Activated B cell treated with CpG ODN at 0.5 μM for 24 hours (primary cell): ENCODE measurements at regions of chr16 and their contacts with region 1.

Region 1: DNA sequence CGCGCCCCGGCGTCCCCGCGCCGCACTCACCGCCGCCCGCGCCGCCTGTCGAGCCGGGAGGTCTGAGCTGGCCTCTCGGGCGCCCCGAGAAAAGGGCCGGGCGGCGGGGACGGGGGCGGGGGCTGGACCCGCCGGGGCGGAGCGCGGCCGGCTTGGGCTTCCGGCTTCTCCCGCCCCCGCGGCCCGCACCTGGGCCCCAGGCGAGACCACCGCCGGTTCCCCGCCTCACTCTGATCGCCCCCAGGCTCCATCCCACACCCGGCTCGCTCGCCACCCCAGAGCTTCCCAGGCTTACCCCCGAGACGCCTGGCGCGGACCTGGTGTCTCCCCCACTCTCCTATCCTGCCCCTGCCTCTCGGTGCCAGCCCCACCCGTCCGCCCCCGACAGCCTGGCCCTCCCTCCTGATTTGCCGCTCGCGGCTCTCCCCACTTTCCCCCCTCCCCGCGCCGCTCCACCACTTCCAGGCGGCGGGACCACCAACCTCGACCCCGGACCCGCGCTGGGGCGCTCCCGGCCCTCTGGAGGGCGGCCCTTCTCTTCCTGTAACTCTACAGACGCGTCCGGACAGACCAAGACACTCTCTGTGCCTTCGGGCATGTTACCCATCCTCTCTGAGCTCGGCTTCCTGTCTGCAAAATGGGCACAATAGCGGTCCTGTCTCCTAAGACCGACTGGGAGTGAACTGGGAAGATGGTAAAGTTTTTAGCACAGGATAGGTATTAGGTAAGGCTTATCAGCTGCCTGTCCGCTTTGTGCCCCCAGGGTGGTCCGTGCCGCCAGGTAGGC is at the start of gene LITAF:
- DNase-seq: peak; percentile 71
- ATAC-seq: peak; percentile 60
- H3K4me3 Mint-ChIP-seq: peak within 1 kb of the TSS; percentile 91
- H3K27ac Mint-ChIP-seq: peak within 1 kb of the TSS; percentile 94
- H3K4me1 Mint-ChIP-seq: peaks cover 48% of the 10 kb centered on the region
- H3K27me3 Mint-ChIP-seq: no peaks in the 10 kb centered on the region
- CTCF ChIP-seq: no peak
- total RNA-seq, gene LITAF: 124 and 126 TPM in 2 replicates

Region 2: DNA sequence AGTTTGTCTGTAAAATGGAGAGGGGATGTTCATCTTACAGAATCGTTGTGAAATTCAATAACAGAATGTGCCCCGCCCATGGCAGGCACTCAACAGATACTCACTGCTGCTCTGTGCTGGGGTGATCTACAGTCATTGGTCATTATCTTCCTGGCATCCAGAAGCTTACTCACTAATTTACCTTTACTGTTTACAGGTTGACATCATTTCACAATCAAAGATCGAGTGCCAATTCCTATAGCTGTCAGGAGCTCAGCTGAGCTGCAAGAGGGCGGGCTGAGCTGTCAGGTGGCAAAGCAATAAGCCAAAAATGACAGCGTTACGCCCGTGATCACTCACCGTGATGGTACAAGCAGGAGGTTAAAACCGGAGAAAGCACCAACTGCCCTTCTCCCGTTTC is 51.6 kb before region 1 on chr16:
- CTCF ChIA-PET with region 1: interaction called, 4 read pairs
- POLR2A ChIA-PET with region 1: interaction called, 8 read pairs
- intact Hi-C with region 1: loop called (anchors 2 kb)
- DNase-seq: no peak
- ATAC-seq: no peak
- H3K4me3 Mint-ChIP-seq: no peak overlapping the region
- H3K27ac Mint-ChIP-seq: no peak overlapping the region
- H3K4me1 Mint-ChIP-seq: no peaks in the 10 kb centered on the region
- H3K27me3 Mint-ChIP-seq: no peaks in the 10 kb centered on the region
- CTCF ChIP-seq: no peak

Region 3: GRCh38 chr16:11597239-11598101 is 10.4 kb after region 1 on chr16:
- CTCF ChIA-PET with region 1: no interaction called
- POLR2A ChIA-PET with region 1: interaction called, 14 read pairs
- intact Hi-C with region 1: loop called (anchors 1 kb)
- DNase-seq: no peak
- ATAC-seq: peak; percentile 85
- H3K4me3 Mint-ChIP-seq: no peak overlapping the region
- H3K27ac Mint-ChIP-seq: peak overlapping the region; percentile 30
- H3K4me1 Mint-ChIP-seq: peaks cover 16% of the 10 kb centered on the region
- H3K27me3 Mint-ChIP-seq: peaks cover 2% of the 10 kb centered on the region
- CTCF ChIP-seq: no peak

Region 4: GRCh38 chr16:11639925-11640899 is 53.2 kb after region 1 on chr16:
- CTCF ChIA-PET with region 1: interaction called, 4 read pairs
- POLR2A ChIA-PET with region 1: no interaction called
- intact Hi-C with region 1: loop called (anchors 2 kb)
- DNase-seq: no peak
- ATAC-seq: no peak
- H3K4me3 Mint-ChIP-seq: no peak overlapping the region
- H3K27ac Mint-ChIP-seq: no peak overlapping the region
- H3K4me1 Mint-ChIP-seq: peaks cover 8% of the 10 kb centered on the region
- H3K27me3 Mint-ChIP-seq: no peaks in the 10 kb centered on the region
- CTCF ChIP-seq: no peak

Region 5: DNA sequence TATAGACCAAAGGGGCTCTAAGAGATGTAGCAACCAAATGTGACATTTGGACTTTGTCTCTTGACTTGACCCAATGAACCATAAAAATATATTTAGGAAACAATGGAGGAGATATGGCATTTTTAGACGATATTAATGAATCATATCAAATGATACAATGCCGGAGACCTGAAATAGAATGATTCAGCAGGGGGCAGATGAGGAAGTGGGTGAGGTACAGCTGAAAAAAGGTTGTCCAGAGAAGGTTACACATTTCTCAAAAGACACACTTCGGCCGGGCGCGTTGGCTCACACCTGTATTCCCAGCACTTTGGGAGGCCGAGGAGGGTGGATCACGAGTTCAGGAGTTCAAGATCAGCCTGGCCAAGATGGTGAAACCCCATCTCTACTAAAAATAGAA is 64.7 kb after region 1 on chr16:
- CTCF ChIA-PET with region 1: no interaction called
- POLR2A ChIA-PET with region 1: no interaction called
- intact Hi-C with region 1: no loop called
- DNase-seq: no peak
- ATAC-seq: no peak
- H3K4me3 Mint-ChIP-seq: no peak overlapping the region
- H3K27ac Mint-ChIP-seq: no peak overlapping the region
- H3K4me1 Mint-ChIP-seq: peaks cover 14% of the 10 kb centered on the region
- H3K27me3 Mint-ChIP-seq: no peaks in the 10 kb centered on the region
- CTCF ChIP-seq: no peak

Region 6: GRCh38 chr16:11682655-11683096 is 95.6 kb after region 1 on chr16:
- CTCF ChIA-PET with region 1: no interaction called
- POLR2A ChIA-PET with region 1: interaction called, 9 read pairs
- intact Hi-C with region 1: loop called (anchors 2 kb)
- DNase-seq: peak; percentile 9
- ATAC-seq: peak; percentile 22
- H3K4me3 Mint-ChIP-seq: peak overlapping the region; percentile 61
- H3K27ac Mint-ChIP-seq: peak overlapping the region; percentile 88
- H3K4me1 Mint-ChIP-seq: peaks cover 98% of the 10 kb centered on the region
- H3K27me3 Mint-ChIP-seq: no peaks in the 10 kb centered on the region
- CTCF ChIP-seq: no peak

Region 7: GRCh38 chr16:11742539-11743307 is 155.7 kb after region 1 on chr16 and contains the start of gene TXNDC11:
- CTCF ChIA-PET with region 1: no interaction called
- POLR2A ChIA-PET with region 1: interaction called, 13 read pairs
- intact Hi-C with region 1: no loop called
- DNase-seq: peak; percentile 100
- ATAC-seq: peak; percentile 91
- H3K4me3 Mint-ChIP-seq: peak within 1 kb of the TSS; percentile 89
- H3K27ac Mint-ChIP-seq: peak within 1 kb of the TSS; percentile 89
- H3K4me1 Mint-ChIP-seq: peaks cover 58% of the 10 kb centered on the region
- H3K27me3 Mint-ChIP-seq: no peaks in the 10 kb centered on the region
- CTCF ChIP-seq: no peak
- total RNA-seq, gene TXNDC11: 54.3 and 63.2 TPM in 2 replicates

Region 8: GRCh38 chr16:11816103-11816502 is 229.1 kb after region 1 on chr16:
- CTCF ChIA-PET with region 1: no interaction called
- POLR2A ChIA-PET with region 1: interaction called, 3 read pairs
- intact Hi-C with region 1: loop called (anchors 1 kb)
- DNase-seq: no peak
- ATAC-seq: no peak
- H3K4me3 Mint-ChIP-seq: no peak overlapping the region
- H3K27ac Mint-ChIP-seq: no peak overlapping the region
- H3K4me1 Mint-ChIP-seq: peaks cover 3% of the 10 kb centered on the region
- H3K27me3 Mint-ChIP-seq: no peaks in the 10 kb centered on the region
- CTCF ChIP-seq: no peak